Ovary (tissue), 10 donors: ENCODE measurements at regions of chr12 and their contacts with region 1.

Region 1: DNA sequence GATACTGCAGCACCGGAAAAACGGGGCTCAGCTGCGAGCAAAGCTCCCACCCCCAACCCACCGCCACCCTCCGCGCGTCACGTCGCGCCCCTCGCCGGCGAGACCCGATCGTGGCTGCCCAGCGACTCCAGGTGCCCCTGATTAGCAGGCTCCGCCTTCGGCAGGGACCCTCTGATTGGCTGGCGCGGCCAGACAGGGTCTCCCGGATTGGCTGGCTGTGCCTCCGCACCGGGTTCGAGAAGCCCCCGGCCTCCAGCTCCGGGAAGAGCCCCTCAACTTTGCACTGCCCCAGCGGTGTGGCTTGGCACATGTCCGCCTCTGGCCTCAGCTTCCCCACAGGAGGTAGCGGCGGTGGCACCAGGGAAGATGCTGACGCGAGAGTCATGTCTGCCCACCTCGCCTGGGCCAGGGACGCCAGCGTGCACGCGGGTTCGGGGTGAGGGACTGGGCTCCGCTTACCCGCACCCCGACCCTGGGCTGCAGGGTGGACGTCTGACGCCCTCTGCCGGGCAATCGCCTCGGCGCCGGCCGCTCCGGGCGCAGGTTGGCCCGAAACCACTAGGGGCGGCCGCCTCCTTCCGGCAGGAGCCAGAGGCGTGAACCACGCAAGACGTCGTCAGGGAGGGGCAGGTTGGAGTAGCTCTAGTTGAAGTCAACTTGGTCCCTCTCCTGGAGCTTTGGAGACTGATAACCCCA is 498 bp upstream of the RHOF start:
- DNase-seq: peak; percentile 91 to 96 (median 92)
- H3K4me3 ChIP-seq: peak overlapping the region; percentile 42
- H3K27ac ChIP-seq: peak overlapping the region; percentile 66 to 77
- H3K4me1 ChIP-seq: peaks cover 25% of the 10 kb centered on the region
- H3K27me3 ChIP-seq: no peaks in the 10 kb centered on the region
- CTCF ChIP-seq: peak; percentile 98 to 100 (median 100)
- EP300 ChIP-seq: no peak
- POLR2A ChIP-seq: peak; percentile 34

Region 2: GRCh38 chr12:121811434-121812319 is 17.7 kb after region 1 on chr12:
- intact Hi-C with region 1: loop called (anchors 2 kb)
- DNase-seq: peak; percentile 77 to 87 (median 80)
- H3K4me3 ChIP-seq: peak overlapping the region; percentile 46
- H3K27ac ChIP-seq: peak overlapping the region; percentile 47 to 76
- H3K4me1 ChIP-seq: peaks cover 2% of the 10 kb centered on the region
- H3K27me3 ChIP-seq: no peaks in the 10 kb centered on the region
- CTCF ChIP-seq: peak; percentile 96 to 98 (median 98)
- EP300 ChIP-seq: no peak
- POLR2A ChIP-seq: no peak

Region 3: DNA sequence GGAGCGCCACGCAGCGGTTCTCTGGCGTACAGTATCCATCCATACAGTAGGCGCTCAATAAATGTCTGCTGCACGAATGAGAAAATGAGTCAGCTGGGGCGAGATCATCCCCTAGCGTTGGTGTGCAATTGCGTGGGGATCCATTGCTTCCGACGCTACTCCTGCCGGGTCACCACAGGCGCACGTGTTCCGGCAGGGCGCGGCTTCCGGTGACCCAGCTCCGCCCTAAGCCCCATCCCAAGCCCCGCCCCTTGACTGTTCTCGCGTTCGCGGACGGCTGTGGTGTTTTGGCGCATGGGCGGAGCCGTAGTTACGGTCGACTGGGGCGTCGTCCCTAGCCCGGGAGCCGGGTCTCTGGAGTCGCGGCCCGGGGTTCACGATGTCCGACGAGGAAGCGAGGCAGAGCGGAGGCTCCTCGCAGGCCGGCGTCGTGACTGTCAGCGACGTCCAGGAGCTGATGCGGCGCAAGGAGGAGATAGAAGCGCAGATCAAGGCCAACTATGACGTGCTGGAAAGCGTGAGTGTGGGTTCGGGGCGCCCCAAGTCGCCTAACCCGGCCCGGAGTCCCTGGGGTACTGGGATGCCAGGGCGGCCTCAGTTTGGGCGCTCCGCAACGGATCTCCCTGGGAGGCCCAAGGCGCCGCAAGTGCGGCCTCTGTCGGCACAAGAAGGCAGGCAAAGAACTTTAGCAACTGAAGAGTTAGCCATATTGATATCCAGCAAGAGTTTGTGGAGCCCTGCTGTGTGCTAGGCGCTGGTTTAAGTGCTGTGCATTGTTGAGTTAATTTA is 94.7 kb after region 1 on chr12 and contains the start of gene PSMD9:
- intact Hi-C with region 1: loop called (anchors 2 to 5 kb)
- DNase-seq: peak; percentile 97 to 99 (median 98)
- H3K4me3 ChIP-seq: peak within 1 kb of the TSS; percentile 96
- H3K27ac ChIP-seq: peak within 1 kb of the TSS; percentile 85 to 86
- H3K4me1 ChIP-seq: peaks cover 10% of the 10 kb centered on the region
- H3K27me3 ChIP-seq: no peaks in the 10 kb centered on the region
- CTCF ChIP-seq: peak; percentile 44 to 70 (median 62)
- EP300 ChIP-seq: peak; percentile 26
- POLR2A ChIP-seq: no peak
- total RNA-seq, gene PSMD9: 24.4 to 57.0 (median 35.5) TPM

Region 4: DNA sequence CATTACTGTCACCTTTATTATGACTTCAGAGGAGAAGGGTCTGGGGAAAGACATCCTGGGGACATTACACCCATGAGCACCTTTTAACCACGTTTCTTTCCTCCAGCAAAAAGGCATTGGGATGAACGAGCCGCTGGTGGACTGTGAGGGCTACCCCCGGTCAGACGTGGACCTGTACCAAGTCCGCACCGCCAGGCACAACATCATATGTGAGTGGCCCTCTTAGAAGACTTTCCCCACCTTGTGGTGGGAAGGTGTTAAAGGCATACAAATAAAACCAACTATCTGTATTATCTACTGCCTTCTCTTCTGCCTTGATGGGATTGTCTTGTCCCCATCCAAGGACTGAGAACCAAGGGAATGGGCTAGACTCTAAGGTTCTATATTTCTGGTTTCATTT is 100.6 kb after region 1 on chr12:
- intact Hi-C with region 1: loop called (anchors 2 to 5 kb)
- DNase-seq: peak in 4 of 5 donors; percentile 37 to 63 (median 48)
- H3K4me3 ChIP-seq: no peak overlapping the region
- H3K27ac ChIP-seq: no peak overlapping the region
- H3K4me1 ChIP-seq: peaks cover 5% of the 10 kb centered on the region
- H3K27me3 ChIP-seq: no peaks in the 10 kb centered on the region
- CTCF ChIP-seq: peak in 2 of 3 donors; percentile 9 to 49
- EP300 ChIP-seq: no peak
- POLR2A ChIP-seq: no peak

Region 5: DNA sequence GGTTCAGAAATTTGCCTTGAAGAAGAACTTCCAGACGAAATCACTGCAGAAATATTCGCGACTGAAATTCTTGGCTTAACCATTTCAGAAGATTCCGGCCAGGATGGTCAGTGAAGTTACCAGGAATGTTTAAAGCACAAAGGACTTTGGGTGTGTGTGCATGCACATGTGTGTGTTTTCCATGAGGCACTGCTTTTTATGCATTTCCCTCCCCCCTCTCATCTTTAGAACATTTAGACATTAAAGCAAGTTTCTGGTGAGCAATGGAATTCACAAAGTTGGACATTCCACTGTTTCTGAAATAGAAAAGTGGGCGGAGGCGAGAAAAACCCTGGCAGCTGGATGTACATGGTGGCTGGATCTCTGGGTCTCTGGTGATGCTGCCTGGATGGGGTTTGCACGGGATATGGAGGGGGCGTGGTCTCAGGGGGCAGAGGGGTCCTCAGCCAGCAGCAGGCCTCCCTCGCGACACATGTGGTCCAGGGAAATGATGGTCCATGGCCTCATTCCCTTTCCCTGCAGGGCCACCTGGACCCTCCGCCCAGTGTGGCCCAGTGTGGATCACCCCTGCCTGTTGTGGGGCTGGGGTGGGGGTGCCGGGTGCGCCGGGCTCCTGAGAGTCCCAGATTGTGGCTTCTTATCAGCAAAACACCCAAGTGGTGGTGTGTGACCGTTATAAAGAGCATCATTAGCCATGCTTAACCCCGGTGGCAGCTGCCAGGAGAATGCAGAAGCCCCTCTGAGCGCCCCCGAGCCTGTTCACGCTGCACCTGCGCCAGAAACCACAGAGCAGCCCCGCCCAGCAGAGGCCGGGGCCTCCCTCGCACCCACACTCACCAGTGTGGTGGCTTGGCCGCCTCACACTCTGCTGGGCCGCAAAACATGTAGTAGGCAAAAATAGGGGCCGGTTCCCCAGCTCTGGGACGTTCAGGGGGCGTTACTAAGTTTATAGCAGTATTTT is 209.9 kb after region 1 on chr12:
- intact Hi-C with region 1: no loop called
- DNase-seq: peak in 1 of 5 donors; percentile 45
- H3K4me3 ChIP-seq: no peak overlapping the region
- H3K27ac ChIP-seq: peak overlapping the region in 1 of 2 donors; percentile 16
- H3K4me1 ChIP-seq: peaks cover 10% of the 10 kb centered on the region
- H3K27me3 ChIP-seq: no peaks in the 10 kb centered on the region
- CTCF ChIP-seq: no peak
- EP300 ChIP-seq: no peak
- POLR2A ChIP-seq: no peak

Region 6: DNA sequence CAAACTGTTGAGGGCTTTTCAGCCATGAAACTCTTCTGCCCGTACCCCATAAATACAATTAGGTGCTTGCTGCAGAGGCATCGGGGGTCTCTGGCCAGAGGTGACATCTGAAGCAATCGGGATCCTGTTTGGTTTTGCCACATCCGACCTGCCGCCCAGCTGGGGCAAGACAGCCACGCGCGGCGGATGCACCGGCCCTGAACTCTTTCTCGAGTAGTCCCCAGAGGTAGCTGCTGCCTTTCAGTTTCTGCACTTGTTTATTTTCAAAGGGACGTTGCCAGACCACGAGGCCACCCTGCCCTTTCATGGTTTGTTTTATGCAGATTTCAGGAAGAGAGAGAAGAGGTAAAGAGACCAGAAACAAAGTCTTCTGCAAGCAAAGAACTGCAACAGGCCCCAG is 274.0 kb after region 1 on chr12:
- intact Hi-C with region 1: no loop called
- DNase-seq: peak in 4 of 5 donors; percentile 63 to 77 (median 65)
- H3K4me3 ChIP-seq: no peak overlapping the region
- H3K27ac ChIP-seq: peak overlapping the region in 1 of 2 donors; percentile 56
- H3K4me1 ChIP-seq: peaks cover 23% of the 10 kb centered on the region
- H3K27me3 ChIP-seq: no peaks in the 10 kb centered on the region
- CTCF ChIP-seq: no peak
- EP300 ChIP-seq: no peak
- POLR2A ChIP-seq: no peak